ENCODE measurements at regions of chr12 and their contacts with region 1.

Region 1: GRCh38 chr12:91355150-91356006 is 172.8 kb upstream of the DCN start:
- DNase-seq: no peak
- H3K4me3 Mint-ChIP-seq: no peak overlapping the region
- H3K27ac Mint-ChIP-seq: no peak overlapping the region
- H3K4me1 Mint-ChIP-seq: no peaks in the 10 kb centered on the region
- H3K27me3 Mint-ChIP-seq: peaks cover 19% of the 10 kb centered on the region

Region 2: DNA sequence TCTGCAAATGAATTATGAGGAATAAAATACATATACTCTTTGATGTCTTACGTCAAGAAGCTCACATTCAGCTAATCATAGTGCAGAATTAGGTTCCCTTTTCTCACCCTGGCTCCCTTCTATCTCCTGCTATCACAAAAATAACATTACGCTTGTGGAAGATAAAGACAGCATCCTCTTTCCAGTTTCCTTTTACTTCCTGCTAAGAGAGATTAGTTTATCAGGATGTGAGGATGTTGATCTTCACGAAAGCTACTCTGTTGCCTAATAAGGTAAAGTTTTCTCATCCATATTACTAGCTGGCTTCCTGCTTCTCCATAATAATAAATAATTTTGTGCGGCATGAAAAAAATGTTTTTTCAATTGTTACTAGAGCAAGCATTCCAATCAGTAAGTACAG is 44.9 kb after region 1 on chr12:
- intact Hi-C with region 1: loop called (anchors 2 kb)
- DNase-seq: no peak
- H3K4me3 Mint-ChIP-seq: no peak overlapping the region
- H3K27ac Mint-ChIP-seq: no peak overlapping the region
- H3K4me1 Mint-ChIP-seq: no peaks in the 10 kb centered on the region
- H3K27me3 Mint-ChIP-seq: no peaks in the 10 kb centered on the region